AG04449 (cell line): ENCODE measurements at regions of chr2 and their contacts with region 1.

Region 1: GRCh38 chr2:72887754-72888437 is 688 bp downstream of the SPR start:
- DNase-seq: no peak
- H3K4me3 ChIP-seq: peak overlapping the region; percentile 67
- CTCF ChIP-seq: peak; percentile 90

Region 2: DNA sequence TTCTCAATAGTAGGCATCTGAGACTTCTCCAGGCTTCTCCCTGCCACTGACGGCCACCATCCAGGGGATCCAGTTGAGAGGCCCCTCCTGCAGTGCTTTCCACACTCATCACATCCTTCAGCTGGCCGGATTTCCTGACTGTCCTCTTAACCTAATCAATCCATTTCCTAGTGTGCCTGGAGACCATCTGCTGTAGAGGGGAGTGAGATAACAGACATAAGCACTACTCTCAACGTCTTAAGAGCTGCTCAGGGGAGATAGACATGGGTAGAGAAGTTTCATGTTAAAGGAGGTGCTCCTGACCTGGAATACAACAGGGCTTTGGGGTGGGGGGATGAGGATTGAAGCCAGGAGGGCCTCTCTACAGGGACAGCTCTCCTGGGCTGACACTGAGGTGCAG is 13.5 kb after region 1 on chr2:
- CTCF ChIA-PET with region 1: interaction called, 44 read pairs
- POLR2A ChIA-PET with region 1: interaction called, 3 read pairs
- DNase-seq: no peak
- H3K4me3 ChIP-seq: no peak overlapping the region
- CTCF ChIP-seq: no peak

Region 3: GRCh38 chr2:72940786-72941185 is 52.9 kb after region 1 on chr2:
- CTCF ChIA-PET with region 1: interaction called, 18 read pairs
- POLR2A ChIA-PET with region 1: no interaction called
- DNase-seq: peak; percentile 56
- H3K4me3 ChIP-seq: no peak overlapping the region
- CTCF ChIP-seq: no peak

Region 4: GRCh38 chr2:72980535-72981217 is 92.8 kb after region 1 on chr2:
- CTCF ChIA-PET with region 1: interaction called, 502 read pairs
- POLR2A ChIA-PET with region 1: no interaction called
- DNase-seq: peak; percentile 29
- H3K4me3 ChIP-seq: no peak overlapping the region
- CTCF ChIP-seq: no peak

Region 5: DNA sequence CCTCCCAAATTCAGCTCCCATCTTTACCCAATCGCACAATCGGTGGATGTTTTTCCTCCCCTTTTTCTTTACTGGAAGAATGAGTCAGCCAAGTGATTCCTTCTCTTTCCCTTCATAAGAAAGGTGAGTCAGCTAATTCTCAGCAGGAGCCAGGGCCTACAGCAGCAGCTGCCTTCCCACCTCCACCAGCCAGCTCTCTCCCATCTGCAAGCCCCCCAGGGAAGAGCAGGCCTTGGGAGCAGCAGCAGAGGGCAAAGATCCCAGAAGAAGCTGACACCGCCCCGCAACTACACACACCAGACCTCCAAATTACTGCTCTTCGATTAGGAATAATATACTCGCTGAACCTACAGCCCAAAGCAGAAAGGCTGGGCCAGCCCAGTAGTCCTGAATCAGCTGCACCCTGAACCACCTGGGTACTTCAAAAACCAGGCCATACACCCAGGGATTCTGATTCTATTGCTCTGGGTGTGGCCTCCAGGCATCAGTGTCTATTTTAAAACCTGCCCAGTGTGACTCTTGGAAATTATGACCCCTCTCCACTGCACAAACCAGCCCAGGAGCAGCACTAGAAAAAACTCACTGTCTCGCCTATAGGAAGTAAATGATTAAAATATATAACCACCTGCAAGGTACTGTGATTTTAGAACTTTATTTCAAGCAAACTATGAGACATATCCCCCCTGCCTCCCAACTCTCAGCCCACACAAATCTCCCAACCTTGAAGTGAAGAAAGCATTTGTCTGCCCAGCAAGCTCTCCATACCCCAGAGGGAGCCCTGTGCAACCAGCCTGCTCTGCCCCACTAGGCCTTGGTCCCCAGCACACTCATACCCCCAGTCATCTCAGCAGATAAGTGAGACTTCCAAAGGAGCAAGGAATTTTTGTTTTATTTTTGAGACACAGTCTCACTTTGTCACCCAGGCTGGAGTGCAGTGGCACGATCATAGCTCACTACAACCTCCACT is 176.3 kb after region 1 on chr2:
- CTCF ChIA-PET with region 1: interaction called, 22 read pairs
- POLR2A ChIA-PET with region 1: no interaction called
- DNase-seq: peak; percentile 31
- H3K4me3 ChIP-seq: no peak overlapping the region
- CTCF ChIP-seq: no peak

Region 6: DNA sequence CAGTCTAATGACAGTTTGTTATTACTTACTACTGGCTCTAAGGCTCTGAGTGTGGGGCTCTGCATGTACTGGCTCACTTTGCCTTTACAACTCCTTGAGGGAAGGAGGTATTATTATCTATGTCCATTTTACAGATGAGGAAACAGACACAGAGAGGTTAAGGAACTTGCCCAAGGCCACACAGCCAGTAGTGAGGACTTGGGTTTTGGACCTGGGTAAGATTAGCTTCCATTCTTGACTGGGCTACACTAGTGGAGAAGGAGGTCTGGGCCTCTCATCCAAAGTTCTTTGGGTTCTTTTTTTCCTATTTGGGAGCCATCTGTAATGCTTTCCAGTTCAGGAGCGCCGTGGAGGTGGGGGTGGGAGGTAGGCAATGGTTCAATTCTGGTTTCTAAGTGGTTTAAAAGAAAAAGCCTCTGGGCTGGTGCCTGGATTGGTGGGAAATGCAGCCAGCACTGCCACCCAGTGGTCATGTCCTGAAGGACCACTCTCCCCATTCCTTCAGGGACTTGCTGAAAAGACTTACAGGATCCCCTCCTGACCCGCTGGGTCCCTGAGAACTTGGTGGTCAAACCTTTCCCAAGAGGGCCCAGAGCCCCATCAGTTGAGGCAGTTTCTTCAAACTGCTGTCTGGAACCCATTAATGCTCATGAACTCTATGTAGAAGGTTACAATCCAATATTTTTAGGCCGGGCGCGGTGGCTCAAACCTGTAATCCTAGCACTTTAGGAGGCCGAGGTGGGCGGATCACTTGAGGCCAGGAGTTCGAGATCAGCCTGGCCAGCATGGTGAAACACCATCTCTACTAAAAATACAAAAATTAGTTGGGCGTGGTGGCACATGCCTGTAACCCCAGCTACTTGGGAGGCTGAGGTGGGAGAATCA is 275.8 kb after region 1 on chr2:
- CTCF ChIA-PET with region 1: interaction called, 294 read pairs
- POLR2A ChIA-PET with region 1: interaction called, 6 read pairs
- DNase-seq: no peak
- H3K4me3 ChIP-seq: no peak overlapping the region
- CTCF ChIP-seq: peak; percentile 87